ENCODE measurements at regions of chr17 and their contacts with region 1.

Region 1: DNA sequence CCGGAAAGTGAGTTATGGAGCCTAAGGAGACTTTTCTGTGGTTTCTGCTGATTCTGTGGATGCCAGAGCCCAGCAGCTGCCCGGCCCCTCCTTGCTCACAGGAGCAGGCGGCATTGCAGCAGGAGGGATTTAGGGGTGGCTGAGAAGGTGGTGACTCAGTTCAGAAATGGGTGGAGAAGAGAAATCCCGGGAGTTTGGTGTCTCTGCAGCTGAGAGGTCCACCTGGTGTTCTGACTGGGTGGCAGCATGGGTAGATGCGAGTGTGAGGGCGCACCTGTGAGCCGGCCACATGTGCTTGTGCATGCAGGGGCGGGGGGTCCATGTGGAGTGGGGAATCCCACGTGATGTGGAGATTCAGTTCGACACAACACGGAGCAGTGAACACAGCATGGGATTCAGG is 16.1 kb upstream of the SPPL2C start:
- DNase-seq: no peak
- ATAC-seq: no peak
- H3K4me3 Mint-ChIP-seq: no peak overlapping the region
- H3K27ac Mint-ChIP-seq: no peak overlapping the region
- H3K4me1 Mint-ChIP-seq: no peaks in the 10 kb centered on the region
- H3K27me3 Mint-ChIP-seq: peaks cover 2% of the 10 kb centered on the region
- CTCF ChIP-seq: no peak

Region 2: GRCh38 chr17:45573924-45574770 is 254.5 kb before region 1 on chr17:
- CTCF ChIA-PET with region 1: no interaction called
- POLR2A ChIA-PET with region 1: no interaction called
- intact Hi-C with region 1: no loop called
- DNase-seq: no peak
- ATAC-seq: no peak
- H3K4me3 Mint-ChIP-seq: no peak overlapping the region
- H3K27ac Mint-ChIP-seq: no peak overlapping the region
- H3K4me1 Mint-ChIP-seq: peaks cover 21% of the 10 kb centered on the region
- H3K27me3 Mint-ChIP-seq: no peaks in the 10 kb centered on the region
- CTCF ChIP-seq: no peak

Region 3: GRCh38 chr17:45640141-45640850 is 188.3 kb before region 1 on chr17:
- CTCF ChIA-PET with region 1: interaction called, 58 read pairs
- POLR2A ChIA-PET with region 1: interaction called, 3 read pairs
- intact Hi-C with region 1: loop called (anchors 2 kb)
- DNase-seq: peak; percentile 77
- ATAC-seq: peak; percentile 89
- H3K4me3 Mint-ChIP-seq: no peak overlapping the region
- H3K27ac Mint-ChIP-seq: peak overlapping the region; percentile 39
- H3K4me1 Mint-ChIP-seq: peaks cover 5% of the 10 kb centered on the region
- H3K27me3 Mint-ChIP-seq: no peaks in the 10 kb centered on the region
- CTCF ChIP-seq: peak; percentile 90

Region 4: GRCh38 chr17:45648642-45649041 is 180.0 kb before region 1 on chr17:
- CTCF ChIA-PET with region 1: interaction called, 28 read pairs
- POLR2A ChIA-PET with region 1: no interaction called
- intact Hi-C with region 1: no loop called
- DNase-seq: peak; percentile 19
- ATAC-seq: no peak
- H3K4me3 Mint-ChIP-seq: no peak overlapping the region
- H3K27ac Mint-ChIP-seq: no peak overlapping the region
- H3K4me1 Mint-ChIP-seq: peaks cover 9% of the 10 kb centered on the region
- H3K27me3 Mint-ChIP-seq: no peaks in the 10 kb centered on the region
- CTCF ChIP-seq: peak; percentile 37

Region 5: GRCh38 chr17:45666046-45666600 is 162.5 kb before region 1 on chr17:
- CTCF ChIA-PET with region 1: interaction called, 10 read pairs
- POLR2A ChIA-PET with region 1: no interaction called
- intact Hi-C with region 1: no loop called
- DNase-seq: no peak
- ATAC-seq: no peak
- H3K4me3 Mint-ChIP-seq: no peak overlapping the region
- H3K27ac Mint-ChIP-seq: no peak overlapping the region
- H3K4me1 Mint-ChIP-seq: no peaks in the 10 kb centered on the region
- H3K27me3 Mint-ChIP-seq: peaks cover 12% of the 10 kb centered on the region
- CTCF ChIP-seq: no peak

Region 6: DNA sequence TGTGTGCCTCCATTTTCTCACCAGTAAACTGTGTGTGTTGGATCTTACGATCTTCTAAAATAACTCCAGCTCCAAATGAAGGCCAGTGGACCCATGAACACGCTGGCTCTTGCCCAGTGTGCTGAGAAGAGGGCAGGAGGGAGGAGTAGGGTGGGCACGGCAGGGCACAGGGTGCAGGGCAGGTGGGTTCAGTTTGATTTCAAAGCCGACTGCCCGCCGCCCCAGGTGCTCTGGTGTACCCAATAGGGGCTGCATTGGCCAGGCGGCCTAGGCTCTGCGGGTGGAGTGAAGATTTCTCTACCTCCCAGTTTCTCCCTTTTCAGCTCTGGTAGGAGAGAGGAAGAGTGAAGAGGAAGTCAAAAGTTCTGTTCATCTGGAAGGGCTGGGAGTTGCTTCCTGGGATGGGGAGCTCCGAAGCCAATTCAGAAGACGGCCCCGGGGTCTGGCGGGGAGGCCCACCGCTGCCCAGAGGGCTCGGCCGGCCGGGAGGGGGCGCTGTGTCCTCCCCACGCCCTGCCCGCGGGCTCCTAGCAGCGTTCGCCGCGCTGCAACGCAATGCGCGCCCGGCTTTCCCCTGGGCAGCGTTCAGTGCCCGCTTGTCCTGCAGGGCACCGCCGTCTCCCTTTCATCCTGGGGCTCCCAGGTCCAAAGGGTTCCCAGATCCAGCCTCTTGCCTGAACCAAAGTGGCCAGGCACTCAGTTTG is 45.6 kb before region 1 on chr17:
- CTCF ChIA-PET with region 1: interaction called, 13 read pairs
- POLR2A ChIA-PET with region 1: no interaction called
- intact Hi-C with region 1: no loop called
- DNase-seq: peak; percentile 57
- ATAC-seq: peak; percentile 78
- H3K4me3 Mint-ChIP-seq: peak overlapping the region; percentile 63
- H3K27ac Mint-ChIP-seq: no peak overlapping the region
- H3K4me1 Mint-ChIP-seq: peaks cover 2% of the 10 kb centered on the region
- H3K27me3 Mint-ChIP-seq: peaks cover 59% of the 10 kb centered on the region
- CTCF ChIP-seq: peak; percentile 92

Region 7: GRCh38 chr17:45801421-45801820 is 27.2 kb before region 1 on chr17:
- CTCF ChIA-PET with region 1: no interaction called
- POLR2A ChIA-PET with region 1: no interaction called
- intact Hi-C with region 1: no loop called
- DNase-seq: no peak
- ATAC-seq: no peak
- H3K4me3 Mint-ChIP-seq: no peak overlapping the region
- H3K27ac Mint-ChIP-seq: no peak overlapping the region
- H3K4me1 Mint-ChIP-seq: no peaks in the 10 kb centered on the region
- H3K27me3 Mint-ChIP-seq: peaks cover 14% of the 10 kb centered on the region
- CTCF ChIP-seq: no peak

Region 8: DNA sequence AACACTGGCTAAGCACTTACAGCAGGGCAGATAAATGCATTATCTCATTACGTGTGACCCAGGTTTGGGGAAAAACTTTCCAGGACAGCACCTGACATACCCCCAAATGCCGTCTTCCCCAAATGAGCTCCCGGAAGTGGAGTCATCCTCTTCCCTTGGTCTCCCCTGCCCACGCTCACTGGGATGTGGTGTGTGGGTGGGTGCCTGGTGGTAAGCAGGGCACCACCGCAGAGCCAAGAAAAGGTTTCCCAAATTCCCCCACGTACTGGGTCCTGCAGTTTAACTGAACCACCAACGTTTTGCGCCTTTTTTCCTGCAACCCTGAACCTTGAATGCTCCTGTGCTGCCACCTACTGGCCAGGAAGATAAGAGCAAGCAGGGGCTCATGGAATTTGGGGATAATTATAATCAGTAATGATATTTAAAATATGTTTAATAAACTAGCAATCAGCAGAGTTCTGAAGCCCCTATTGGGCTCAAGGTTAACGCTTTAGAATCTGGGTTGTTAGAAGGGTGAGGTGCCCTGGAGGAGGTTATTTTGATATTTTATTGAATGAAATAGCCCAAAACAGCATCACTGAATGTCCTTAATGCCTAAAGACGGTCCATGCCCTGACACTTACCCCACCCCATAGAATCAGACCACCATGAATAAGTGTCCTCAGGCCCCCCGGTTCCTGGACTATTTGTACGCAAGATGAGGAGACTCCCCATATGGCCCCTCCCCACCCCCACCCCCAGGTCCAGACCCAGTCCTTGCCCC is 24.1 kb after region 1 on chr17:
- CTCF ChIA-PET with region 1: interaction called, 17 read pairs
- POLR2A ChIA-PET with region 1: no interaction called
- intact Hi-C with region 1: no loop called
- DNase-seq: peak; percentile 76
- ATAC-seq: peak; percentile 37
- H3K4me3 Mint-ChIP-seq: no peak overlapping the region
- H3K27ac Mint-ChIP-seq: no peak overlapping the region
- H3K4me1 Mint-ChIP-seq: peaks cover 5% of the 10 kb centered on the region
- H3K27me3 Mint-ChIP-seq: peaks cover 15% of the 10 kb centered on the region
- CTCF ChIP-seq: peak; percentile 92

Region 9: DNA sequence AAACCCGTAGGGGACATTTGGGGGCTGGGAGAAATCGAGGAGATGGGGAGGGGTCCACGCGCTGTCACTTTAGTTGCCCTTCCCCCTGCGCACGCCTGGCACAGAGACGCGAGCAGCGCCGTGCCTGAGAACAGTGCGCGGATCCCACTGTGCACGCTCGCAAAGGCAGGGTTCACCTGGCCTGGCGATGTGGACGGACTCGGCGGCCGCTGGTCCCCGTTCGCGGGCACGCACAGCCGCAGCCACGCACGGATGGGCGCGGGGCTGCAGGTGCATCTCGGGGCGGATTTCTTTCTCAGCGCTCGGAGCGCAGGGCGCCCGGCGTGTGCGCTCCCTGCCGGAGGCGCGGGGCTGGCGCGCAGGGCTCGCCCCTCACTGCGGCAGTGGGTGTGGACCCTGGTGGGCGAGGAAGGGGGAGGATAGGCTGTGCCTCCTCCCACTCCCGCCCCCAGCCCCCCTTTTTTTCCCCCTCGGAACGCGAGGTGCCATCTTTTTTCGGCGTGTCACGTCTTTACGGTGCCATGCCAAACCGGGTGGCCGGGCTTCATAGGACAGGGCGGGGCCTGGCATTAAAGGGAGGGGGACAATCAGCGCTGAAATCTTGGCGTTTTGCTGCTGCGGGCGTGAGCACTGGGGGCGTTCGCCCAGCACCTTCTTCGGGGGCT is 66.8 kb after region 1 on chr17:
- CTCF ChIA-PET with region 1: no interaction called
- POLR2A ChIA-PET with region 1: no interaction called
- intact Hi-C with region 1: no loop called
- DNase-seq: peak; percentile 17
- ATAC-seq: no peak
- H3K4me3 Mint-ChIP-seq: peak overlapping the region; percentile 75
- H3K27ac Mint-ChIP-seq: no peak overlapping the region
- H3K4me1 Mint-ChIP-seq: peaks cover 19% of the 10 kb centered on the region
- H3K27me3 Mint-ChIP-seq: peaks cover 52% of the 10 kb centered on the region
- CTCF ChIP-seq: no peak